ENCODE measurements at regions of chr2 and their contacts with region 1.

Region 1: DNA sequence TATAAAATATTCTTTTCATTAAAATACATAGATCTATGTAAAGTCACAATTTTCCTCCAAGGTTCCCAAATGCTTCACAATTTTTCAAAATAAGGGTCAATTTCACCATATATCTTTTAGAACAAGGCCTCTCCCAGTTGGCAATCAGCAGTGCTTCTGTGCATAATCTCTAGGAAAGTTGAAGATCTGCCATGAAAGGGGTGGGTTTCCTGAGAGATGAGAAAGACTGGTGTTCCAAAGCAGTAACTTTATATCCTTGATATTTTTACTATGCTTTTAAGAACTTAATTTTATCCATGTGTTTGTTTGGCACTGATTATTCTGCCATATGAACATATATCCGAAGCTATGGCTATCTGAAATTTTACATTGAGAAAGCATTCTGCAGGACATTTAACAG is 199.4 kb upstream of the CYP26B1 start:
- DNase-seq: peak in 1 of 2 donors; percentile 1
- H3K4me3 ChIP-seq: no peak overlapping the region
- H3K27ac ChIP-seq: no peak overlapping the region
- H3K4me1 ChIP-seq: no peaks in the 10 kb centered on the region
- H3K27me3 ChIP-seq: no peaks in the 10 kb centered on the region
- CTCF ChIP-seq: no peak
- EP300 ChIP-seq: no peak
- POLR2A ChIP-seq: no peak

Region 2: GRCh38 chr2:71683070-71683469 is 664.0 kb before region 1 on chr2:
- intact Hi-C with region 1: loop called (anchors 5 kb)
- DNase-seq: no peak
- H3K4me3 ChIP-seq: no peak overlapping the region
- H3K27ac ChIP-seq: no peak overlapping the region
- H3K4me1 ChIP-seq: no peaks in the 10 kb centered on the region
- H3K27me3 ChIP-seq: no peaks in the 10 kb centered on the region
- CTCF ChIP-seq: no peak
- EP300 ChIP-seq: no peak
- POLR2A ChIP-seq: no peak

Measured in stomach (tissue), 19 donors.